ENCODE measurements at regions of chr20 and their contacts with region 1.

Region 1: GRCh38 chr20:20083807-20084206 is 31.5 kb downstream of the CFAP61 start:
- DNase-seq: peak; percentile 2
- ATAC-seq: peak; percentile 81
- H3K4me3 ChIP-seq: no peak overlapping the region
- H3K27ac ChIP-seq: no peak overlapping the region
- H3K4me1 ChIP-seq: no peaks in the 10 kb centered on the region
- H3K27me3 ChIP-seq: no peaks in the 10 kb centered on the region; a peak in 2 of 4 replicates
- CTCF ChIP-seq: peak; percentile 31 to 56 (median 43); a peak in 4 of 6 replicates
- EP300 ChIP-seq: no peak
- POLR2A ChIP-seq: no peak
- RAD21 ChIP-seq: peak; percentile 69

Region 2: GRCh38 chr20:20360464-20360863 is 276.7 kb after region 1 on chr20:
- CTCF ChIA-PET with region 1: interaction called, 3 read pairs
- POLR2A ChIA-PET with region 1: no interaction called
- RAD21 ChIA-PET with region 1: no interaction called
- SMC1A ChIA-PET with region 1: interaction called, 3 read pairs
- in situ Hi-C with region 1: no loop called
- intact Hi-C with region 1: loop called (anchors 10 kb)
- DNase-seq: no peak
- ATAC-seq: peak; percentile 86
- H3K4me3 ChIP-seq: no peak overlapping the region
- H3K27ac ChIP-seq: no peak overlapping the region
- H3K4me1 ChIP-seq: no peaks in the 10 kb centered on the region
- H3K27me3 ChIP-seq: peaks cover 16 to 28% of the 10 kb centered on the region in 2 experiments
- CTCF ChIP-seq: peak; percentile 69 to 84 (median 78)
- EP300 ChIP-seq: no peak
- POLR2A ChIP-seq: no peak
- RAD21 ChIP-seq: peak; percentile 77

Measured in GM12878 (cell line).